ENCODE measurements at regions of chr13 and their contacts with region 1.

Region 1: GRCh38 chr13:110712849-110713641 is 455 bp upstream of the ING1 start:
- DNase-seq: peak; percentile 99
- ATAC-seq: peak; percentile 73 to 75

Region 2: GRCh38 chr13:110485603-110486002 is 227.4 kb before region 1 on chr13:
- intact Hi-C with region 1: no loop called
- DNase-seq: no peak
- ATAC-seq: no peak

Region 3: GRCh38 chr13:110665491-110666254 is 47.4 kb before region 1 on chr13:
- intact Hi-C with region 1: no loop called
- DNase-seq: no peak
- ATAC-seq: peak; percentile 25 to 38

Region 4: DNA sequence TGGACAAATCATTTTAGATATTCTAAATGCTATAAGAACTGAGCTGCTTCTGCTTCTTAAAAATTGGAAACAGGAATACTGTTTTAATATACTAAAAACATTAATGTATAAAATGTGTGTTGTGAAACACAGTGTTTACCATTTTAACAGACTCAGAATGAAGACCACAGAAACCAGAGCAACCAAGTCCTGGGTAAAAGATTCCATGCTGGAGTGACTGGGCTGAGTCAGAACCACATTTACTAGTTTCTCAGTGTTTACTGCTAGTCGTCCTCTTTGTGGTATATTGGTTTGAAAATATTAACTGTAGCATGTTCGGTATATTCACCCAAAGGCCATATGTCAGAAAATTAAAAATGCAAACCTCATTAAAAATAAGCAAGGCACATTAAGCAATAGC is 169.9 kb after region 1 on chr13:
- intact Hi-C with region 1: no loop called
- DNase-seq: no peak
- ATAC-seq: no peak

Region 5: DNA sequence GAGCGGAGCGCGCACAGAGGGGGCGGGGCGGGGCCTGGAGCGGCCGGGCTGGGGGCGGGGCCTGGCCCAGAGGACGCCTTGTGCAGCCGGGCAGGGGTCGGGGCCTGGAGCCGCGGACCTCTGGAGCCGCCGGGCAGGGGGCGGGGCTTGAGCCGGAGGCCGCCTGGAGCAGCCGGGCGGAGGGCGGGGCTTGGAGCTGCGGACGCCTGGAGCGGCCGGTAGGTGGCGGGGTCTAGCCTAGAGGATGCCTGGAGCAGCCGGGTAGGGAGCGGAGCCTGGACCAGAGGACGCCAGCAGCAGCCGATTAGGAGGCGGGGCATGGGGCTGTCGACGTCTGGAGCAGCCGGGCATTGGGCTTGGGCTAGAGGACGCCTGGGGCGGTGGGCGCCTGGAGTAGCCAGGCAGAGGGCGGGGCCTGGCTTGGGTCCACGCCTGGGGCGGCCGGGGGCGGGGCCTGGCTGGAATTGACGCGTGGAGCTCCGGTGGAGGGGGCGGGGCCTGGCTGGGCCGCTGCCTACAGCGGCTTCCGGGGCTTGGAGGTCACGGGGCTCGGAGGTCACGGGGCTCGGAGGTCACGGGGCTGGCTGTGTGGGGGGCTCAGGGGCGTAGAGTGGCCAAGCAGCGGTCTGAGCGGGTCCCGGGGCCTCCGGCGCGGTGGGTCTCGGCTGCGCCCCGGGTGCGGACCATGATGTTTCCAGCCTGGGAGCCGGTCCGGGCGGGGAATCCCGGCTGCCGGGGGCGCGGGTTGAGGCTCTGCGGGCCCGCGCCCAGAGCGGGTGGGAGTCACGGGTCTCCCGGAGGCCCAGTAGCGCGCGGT is 202.2 kb after region 1 on chr13 and contains the start of gene ANKRD10:
- intact Hi-C with region 1: loop called in 1 of 2 experiments (anchors 2 kb)
- DNase-seq: peak; percentile 99
- ATAC-seq: peak; percentile 91 to 94
- total RNA-seq, gene ANKRD10: 48.7 to 78.7 TPM